GM13977 (cell line): ENCODE measurements at regions of chr3 and their contacts with region 1.

Region 1: GRCh38 chr3:133927540-133928066 is 31.9 kb upstream of the RAB6B start:
- DNase-seq: peak; percentile 92
- CTCF ChIP-seq: peak; percentile 92

Region 2: DNA sequence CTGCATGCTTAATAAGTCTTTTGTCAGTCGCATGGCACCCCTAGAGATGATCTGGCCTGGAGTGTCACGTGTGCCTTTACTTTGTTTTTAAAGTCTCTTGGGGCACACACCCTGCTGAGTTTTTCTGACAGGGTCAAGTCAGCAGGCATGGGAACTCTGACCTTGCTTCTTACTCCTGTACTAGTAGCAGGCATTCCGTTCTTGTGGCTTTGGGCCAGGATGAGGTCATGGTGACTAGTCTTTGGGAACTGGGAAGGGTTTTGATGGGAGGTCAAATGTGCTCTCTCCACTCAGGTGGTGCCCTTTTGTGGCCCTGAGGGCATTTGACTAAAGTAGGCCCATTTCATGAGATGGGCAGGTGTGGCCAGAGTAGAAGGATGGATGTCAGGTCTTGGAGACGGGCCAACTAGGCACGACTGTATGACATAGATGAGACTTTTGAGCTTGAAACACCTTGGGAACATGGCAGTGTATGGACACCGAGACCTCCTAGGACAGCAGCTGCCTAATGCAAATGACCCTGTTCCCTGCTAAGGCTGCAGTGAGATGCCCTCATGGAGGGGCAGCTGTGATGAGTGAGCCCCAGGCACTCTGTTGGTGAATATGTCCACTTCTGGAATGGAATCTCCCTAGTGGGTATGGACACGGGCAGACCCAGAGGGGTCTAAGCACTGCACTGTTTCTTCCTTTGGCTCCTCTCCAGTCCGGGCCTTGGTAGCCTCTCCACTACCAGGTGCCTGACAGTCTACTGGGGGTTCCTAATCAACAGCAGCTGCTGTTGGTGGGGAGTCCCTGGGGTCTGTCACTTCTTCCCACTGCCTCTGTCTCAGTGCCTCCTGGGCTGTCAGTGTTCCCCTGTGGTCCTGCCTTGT is 105.6 kb before region 1 on chr3:
- in situ Hi-C with region 1: loop called (anchors 10 kb)
- DNase-seq: no peak
- CTCF ChIP-seq: no peak

Region 3: DNA sequence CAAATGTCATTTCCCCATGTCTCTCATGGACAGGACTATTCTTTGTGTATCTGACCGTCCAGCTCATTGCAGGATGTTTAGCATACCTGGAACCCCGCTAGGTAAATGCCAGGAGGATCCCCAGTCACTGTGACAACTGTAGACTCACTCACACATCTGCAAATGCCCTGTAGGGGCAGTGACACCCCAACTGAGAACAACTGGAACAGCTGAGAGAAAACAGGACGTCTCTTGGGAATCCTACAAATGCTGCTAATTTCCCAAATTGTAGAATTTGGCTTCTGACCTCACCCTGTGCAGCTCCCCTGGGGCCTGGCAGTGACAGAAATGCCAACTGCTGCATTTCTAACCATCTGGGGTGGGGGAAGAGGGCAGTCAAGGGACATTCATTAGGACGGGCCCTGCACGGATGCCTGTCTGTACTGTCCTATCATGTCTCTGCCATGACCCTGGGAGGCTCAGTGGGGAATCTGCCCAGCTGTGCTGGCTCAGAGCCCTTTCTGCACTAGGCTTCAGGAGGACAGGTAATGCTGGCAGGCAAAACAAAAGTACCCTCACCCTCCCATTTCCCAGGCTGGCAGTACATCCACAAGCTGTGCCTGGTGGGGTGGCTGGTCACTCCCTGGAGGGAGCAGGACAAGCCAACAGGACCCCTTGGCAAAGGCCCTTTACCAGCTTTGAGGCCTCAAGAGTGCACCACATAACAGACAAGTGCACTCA is 62.3 kb before region 1 on chr3:
- in situ Hi-C with region 1: no loop called
- DNase-seq: no peak
- CTCF ChIP-seq: no peak